PC-9 (cell line): ENCODE measurements at regions of chr12 and their contacts with region 1.

Region 1: GRCh38 chr12:76236611-76237010 is 111.6 kb downstream of the BBS10 start:
- DNase-seq: peak; percentile 44 to 87
- H3K4me3 ChIP-seq: no peak overlapping the region
- H3K27ac ChIP-seq: peak overlapping the region; percentile 42
- H3K4me1 ChIP-seq: peaks cover 18% of the 10 kb centered on the region
- H3K27me3 ChIP-seq: no peaks in the 10 kb centered on the region
- CTCF ChIP-seq: no peak

Region 2: DNA sequence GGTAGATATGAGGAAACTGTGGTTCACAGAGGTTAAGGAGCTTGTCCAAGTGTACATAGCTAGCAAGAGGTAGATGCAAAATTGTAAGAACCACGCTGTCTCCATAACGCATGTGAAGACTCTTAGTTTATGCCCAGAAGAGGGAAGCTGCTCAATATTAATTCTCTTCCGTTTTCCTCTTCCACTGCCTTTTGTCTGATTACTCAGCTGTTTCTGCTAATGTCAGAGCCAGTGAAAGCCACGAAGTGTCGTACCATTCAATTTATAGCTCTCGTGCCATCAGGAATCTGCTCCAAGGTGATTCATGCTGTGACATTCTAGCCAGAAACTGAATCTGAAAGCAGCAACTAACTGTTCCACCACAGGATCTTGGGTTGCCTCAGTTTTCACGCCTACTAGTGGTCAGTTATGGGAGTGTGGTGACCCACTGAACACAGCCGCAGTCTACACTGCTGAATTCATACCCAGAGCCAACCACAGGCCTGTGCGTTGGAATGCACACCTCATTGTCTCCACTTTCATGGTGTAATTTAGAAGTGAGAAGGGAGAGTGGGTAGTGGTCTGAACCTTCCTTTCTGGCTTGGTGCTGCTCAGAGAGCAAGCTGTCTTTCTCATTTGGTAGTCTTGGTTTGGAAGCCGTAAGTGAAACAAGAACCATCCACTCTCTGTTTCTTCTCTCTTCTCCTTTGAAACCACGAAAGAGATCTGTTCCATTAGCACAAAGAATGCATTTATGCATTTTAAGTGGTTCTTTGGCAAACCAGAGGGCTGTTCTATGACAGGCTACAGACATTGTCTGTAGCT is 77.9 kb before region 1 on chr12:
- CTCF ChIA-PET with region 1: no interaction called
- POLR2A ChIA-PET with region 1: no interaction called
- intact Hi-C with region 1: loop called (anchors 2 kb)
- DNase-seq: peak in 1 of 2 experiments; percentile 53
- H3K4me3 ChIP-seq: no peak overlapping the region
- H3K27ac ChIP-seq: no peak overlapping the region
- H3K4me1 ChIP-seq: no peaks in the 10 kb centered on the region
- H3K27me3 ChIP-seq: no peaks in the 10 kb centered on the region
- CTCF ChIP-seq: peak; percentile 57